Right cardiac atrium (tissue), 5 donors: ENCODE measurements at regions of chr16 and their contacts with region 1.

Region 1: DNA sequence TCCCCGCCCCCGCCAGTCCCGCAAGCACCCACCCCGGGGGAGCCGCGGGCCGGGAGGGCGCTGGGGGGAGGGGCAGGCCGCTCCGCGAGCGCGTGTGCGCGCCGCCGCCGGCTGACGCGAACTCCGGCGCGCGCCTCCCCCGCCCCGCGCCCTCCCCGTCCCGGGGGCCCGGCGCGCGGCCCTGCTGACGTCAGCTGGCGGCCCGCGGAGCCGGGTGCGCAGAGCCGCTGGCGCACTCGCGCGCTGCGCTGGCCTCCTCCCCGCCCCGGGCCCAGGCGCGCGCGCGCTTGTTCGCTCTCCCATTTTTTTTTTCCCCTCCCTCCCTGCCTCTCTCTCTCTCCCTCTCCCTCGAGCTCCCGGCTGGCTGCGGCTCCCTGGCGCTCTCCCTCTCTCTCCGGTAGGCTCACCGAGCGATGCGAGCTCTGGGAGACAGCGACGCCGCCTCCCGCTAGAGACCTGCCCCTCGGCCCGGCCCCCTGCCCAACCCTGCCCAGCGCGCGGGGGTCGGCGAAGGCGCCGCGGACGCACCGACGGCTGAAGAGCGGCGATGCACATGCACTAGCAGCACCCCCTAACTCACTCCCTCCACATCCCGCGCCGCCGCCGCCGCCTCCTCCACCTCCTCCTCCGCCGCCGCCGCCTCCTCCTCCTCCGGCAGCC is at the start of gene GNAO1:
- DNase-seq: peak; percentile 83 to 93 (median 93)
- ATAC-seq: peak; percentile 82
- H3K4me3 ChIP-seq: peak within 1 kb of the TSS; percentile 82
- H3K27ac ChIP-seq: peak within 1 kb of the TSS; percentile 89
- H3K4me1 ChIP-seq: peaks cover 2% of the 10 kb centered on the region
- H3K27me3 ChIP-seq: no peaks in the 10 kb centered on the region
- total RNA-seq, gene GNAO1: 96.7 to 163 (median 139) TPM

Region 2: GRCh38 chr16:56041686-56042085 is 149.6 kb before region 1 on chr16:
- intact Hi-C with region 1: loop called in 1 of 4 experiments (anchors 5 kb)
- DNase-seq: peak in 2 of 3 donors; percentile 43 to 48
- ATAC-seq: peak; percentile 74
- H3K4me3 ChIP-seq: no peak overlapping the region
- H3K27ac ChIP-seq: no peak overlapping the region
- H3K4me1 ChIP-seq: peaks cover 3% of the 10 kb centered on the region
- H3K27me3 ChIP-seq: no peaks in the 10 kb centered on the region

Region 3: GRCh38 chr16:56252835-56253234 is 61.5 kb after region 1 on chr16:
- intact Hi-C with region 1: loop called in 1 of 4 experiments (anchors 5 kb)
- DNase-seq: peak; percentile 70 to 92 (median 89)
- ATAC-seq: peak; percentile 91 to 94
- H3K4me3 ChIP-seq: no peak overlapping the region
- H3K27ac ChIP-seq: peak overlapping the region; percentile 93
- H3K4me1 ChIP-seq: peaks cover 13% of the 10 kb centered on the region
- H3K27me3 ChIP-seq: no peaks in the 10 kb centered on the region

Region 4: DNA sequence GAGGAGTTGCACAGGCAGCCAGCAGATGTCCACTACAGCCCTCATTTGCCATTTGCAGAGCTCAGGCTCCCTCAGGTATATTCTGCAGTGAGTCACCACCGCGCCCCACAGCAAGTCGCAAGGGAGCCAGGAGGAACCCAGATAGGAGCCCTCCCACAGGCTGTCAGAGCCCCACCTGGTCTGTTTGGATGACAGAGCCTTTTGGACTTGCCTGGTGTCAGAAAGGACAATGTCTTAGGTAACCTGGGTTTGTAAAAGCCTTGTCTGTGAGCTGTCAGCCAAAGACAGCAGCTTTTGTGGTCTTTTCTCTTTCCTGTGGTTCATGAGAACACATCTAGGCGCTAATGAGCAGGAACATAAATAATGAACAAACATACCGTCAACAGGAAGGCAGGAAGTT is 70.9 kb after region 1 on chr16:
- intact Hi-C with region 1: loop called in 2 of 4 experiments (anchors 5 to 10 kb)
- DNase-seq: no peak
- ATAC-seq: no peak
- H3K4me3 ChIP-seq: no peak overlapping the region
- H3K27ac ChIP-seq: peak overlapping the region; percentile 39
- H3K4me1 ChIP-seq: peaks cover 47% of the 10 kb centered on the region
- H3K27me3 ChIP-seq: no peaks in the 10 kb centered on the region

Region 5: GRCh38 chr16:56269811-56270684 is 78.8 kb after region 1 on chr16:
- intact Hi-C with region 1: loop called in 1 of 4 experiments (anchors 10 kb)
- DNase-seq: peak in 2 of 3 donors; percentile 73 to 74
- ATAC-seq: peak; percentile 89 to 92
- H3K4me3 ChIP-seq: no peak overlapping the region
- H3K27ac ChIP-seq: peak overlapping the region; percentile 88
- H3K4me1 ChIP-seq: peaks cover 13% of the 10 kb centered on the region
- H3K27me3 ChIP-seq: no peaks in the 10 kb centered on the region

Region 6: DNA sequence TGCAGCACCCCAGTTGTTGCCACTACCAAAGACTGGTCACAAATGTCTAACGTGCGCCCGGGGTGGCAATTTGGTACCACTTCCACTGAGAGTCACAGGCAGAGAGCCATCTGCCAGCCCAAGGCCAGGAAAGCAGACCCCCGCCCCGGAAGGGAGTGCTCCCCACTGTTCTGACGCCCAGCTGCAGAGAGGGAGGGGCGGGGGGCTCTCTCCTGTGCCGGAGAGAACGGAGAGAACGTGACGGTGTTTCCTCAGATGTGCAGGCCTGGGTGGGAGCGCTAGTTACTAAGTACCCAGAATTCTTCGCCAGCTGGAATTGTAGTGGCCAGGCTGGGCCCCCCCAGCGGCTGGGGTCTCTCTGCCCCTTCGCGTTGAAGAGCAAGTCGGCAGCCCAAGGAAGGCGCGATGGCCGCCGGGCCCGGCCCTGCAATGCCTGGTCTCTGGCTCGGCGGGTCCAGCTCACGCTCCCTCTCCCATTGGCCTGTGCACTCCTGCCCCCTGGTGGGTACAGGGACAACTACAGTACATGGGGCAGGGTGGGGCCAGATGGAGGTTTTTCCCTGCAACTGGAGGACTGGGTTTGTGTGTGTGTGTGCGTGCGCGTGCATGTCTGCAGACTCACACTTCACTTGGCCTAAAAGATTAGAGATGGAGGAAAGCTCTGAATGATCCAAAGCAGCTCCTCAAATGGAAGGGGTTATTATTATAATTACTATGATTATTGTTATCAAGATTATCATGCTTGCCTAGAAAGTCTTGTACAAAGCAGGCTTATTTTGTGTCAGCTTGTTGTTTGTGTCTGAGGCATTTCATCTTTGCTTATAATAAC is 126.9 kb after region 1 on chr16:
- intact Hi-C with region 1: loop called in 3 of 4 experiments (anchors 5 to 10 kb)
- DNase-seq: peak; percentile 85 to 95 (median 93)
- ATAC-seq: peak; percentile 95 to 96
- H3K4me3 ChIP-seq: peak overlapping the region; percentile 11
- H3K27ac ChIP-seq: peak overlapping the region; percentile 6
- H3K4me1 ChIP-seq: no peaks in the 10 kb centered on the region
- H3K27me3 ChIP-seq: no peaks in the 10 kb centered on the region